Gastrocnemius medialis (tissue), 4 donors: ENCODE measurements at regions of chr13 and their contacts with region 1.

Region 1: GRCh38 chr13:48571126-48571913 is 38.4 kb upstream of the RCBTB2 start:
- DNase-seq: peak; percentile 49 to 54
- ATAC-seq: peak; percentile 81 to 88
- H3K4me3 ChIP-seq: peak overlapping the region; percentile 28 to 46 (median 38)
- H3K27ac ChIP-seq: peak overlapping the region; percentile 82 to 86 (median 86)
- H3K4me1 ChIP-seq: peaks cover 41 to 55% of the 10 kb centered on the region in 2 donors
- H3K27me3 ChIP-seq: no peaks in the 10 kb centered on the region
- CTCF ChIP-seq: no peak
- POLR2A ChIP-seq: no peak

Region 2: GRCh38 chr13:47726351-47726750 is 845.0 kb before region 1 on chr13:
- in situ Hi-C with region 1: no loop called
- intact Hi-C with region 1: no loop called
- DNase-seq: no peak
- ATAC-seq: no peak
- H3K4me3 ChIP-seq: no peak overlapping the region
- H3K27ac ChIP-seq: no peak overlapping the region
- H3K4me1 ChIP-seq: no peaks in the 10 kb centered on the region
- H3K27me3 ChIP-seq: no peaks in the 10 kb centered on the region
- CTCF ChIP-seq: no peak
- POLR2A ChIP-seq: no peak

Region 3: DNA sequence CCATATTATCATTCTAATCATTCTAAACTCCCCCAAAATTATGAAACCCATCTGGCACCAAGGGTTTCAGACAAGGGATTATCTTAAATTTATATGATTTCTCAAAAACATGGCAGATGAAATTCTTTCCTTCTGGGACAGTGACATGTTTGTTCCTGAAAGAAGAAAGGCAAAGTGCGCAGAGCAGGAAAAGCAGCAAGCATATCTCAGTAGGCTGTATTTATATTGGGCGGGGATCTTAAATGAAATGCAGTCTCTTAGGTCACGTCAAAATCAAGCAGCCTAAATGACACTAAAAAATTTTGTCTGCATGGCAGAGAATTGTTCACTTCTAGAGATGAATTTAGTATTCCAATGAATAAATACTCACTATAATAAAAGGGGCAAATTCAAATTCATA is 87.7 kb before region 1 on chr13:
- in situ Hi-C with region 1: no loop called
- intact Hi-C with region 1: no loop called
- DNase-seq: no peak
- ATAC-seq: no peak
- H3K4me3 ChIP-seq: no peak overlapping the region
- H3K27ac ChIP-seq: no peak overlapping the region
- H3K4me1 ChIP-seq: no peaks in the 10 kb centered on the region
- H3K27me3 ChIP-seq: no peaks in the 10 kb centered on the region
- CTCF ChIP-seq: no peak
- POLR2A ChIP-seq: no peak

Region 4: DNA sequence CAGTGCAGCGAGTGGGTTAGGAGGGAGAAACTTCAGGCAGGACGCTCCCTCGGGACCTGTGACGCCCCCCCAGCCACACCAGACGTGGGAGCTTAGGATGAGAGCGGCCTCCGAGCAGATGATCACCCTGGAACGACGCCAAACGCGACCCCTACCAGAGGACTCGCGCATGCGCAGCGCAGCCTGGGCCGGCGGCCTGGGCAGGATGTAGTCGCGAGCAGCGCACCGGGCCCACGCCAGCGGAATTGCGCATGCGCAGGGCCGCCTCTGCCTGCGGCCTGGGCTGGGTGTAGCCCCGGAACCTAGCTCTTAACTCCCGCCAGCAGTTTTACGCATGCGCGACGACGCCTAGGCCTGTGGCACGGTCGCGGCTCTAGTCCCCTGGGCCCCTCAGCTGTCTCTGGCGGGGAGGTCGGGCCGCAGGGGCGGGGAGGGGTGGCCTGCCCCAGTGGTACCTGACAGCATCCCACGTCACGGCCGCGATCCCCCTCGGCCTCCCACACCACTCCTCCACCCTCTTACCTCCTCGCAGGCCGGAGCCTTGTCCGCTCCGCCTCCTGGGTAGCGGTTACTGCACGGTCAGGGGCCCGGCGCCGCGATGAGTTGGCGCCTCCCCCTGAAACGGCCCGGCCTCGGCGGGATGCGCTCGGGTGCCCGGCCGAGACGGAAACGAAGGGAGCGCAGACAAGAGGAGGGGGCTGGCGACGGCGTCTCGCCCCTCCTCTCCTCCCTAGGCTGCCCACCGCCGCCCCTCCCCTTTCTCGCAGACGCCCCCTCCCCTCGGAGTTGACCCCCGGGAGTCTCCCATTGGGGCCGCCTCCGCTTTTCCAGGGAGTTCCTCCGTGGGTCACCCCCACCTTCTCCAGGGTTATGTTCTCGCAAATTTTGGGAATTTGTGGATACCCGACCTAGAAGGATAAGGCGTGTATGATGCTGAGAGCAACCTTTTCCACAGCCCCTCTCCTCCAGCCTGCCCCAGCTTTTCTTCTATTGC is 38.5 kb before region 1 on chr13 and contains the start of gene RCBTB2:
- in situ Hi-C with region 1: no loop called
- intact Hi-C with region 1: loop called (anchors 1 kb)
- DNase-seq: peak; percentile 96 to 98
- ATAC-seq: peak; percentile 95
- H3K4me3 ChIP-seq: peak within 1 kb of the TSS; percentile 81 to 94 (median 90)
- H3K27ac ChIP-seq: peak within 1 kb of the TSS; percentile 92 to 98 (median 94)
- H3K4me1 ChIP-seq: peaks cover 7 to 13% of the 10 kb centered on the region in 2 donors
- H3K27me3 ChIP-seq: no peaks in the 10 kb centered on the region
- CTCF ChIP-seq: no peak
- POLR2A ChIP-seq: peak; percentile 83 to 86
- total RNA-seq, gene RCBTB2: 1.7 to 9.1 (median 7.6) TPM

Region 5: GRCh38 chr13:48542581-48543341 is 28.6 kb before region 1 on chr13:
- in situ Hi-C with region 1: no loop called
- intact Hi-C with region 1: loop called (anchors 2 kb)
- DNase-seq: peak; percentile 77 to 79
- ATAC-seq: peak; percentile 94
- H3K4me3 ChIP-seq: peak overlapping the region; percentile 1 to 23 (median 22)
- H3K27ac ChIP-seq: peak overlapping the region; percentile 76 to 85 (median 81)
- H3K4me1 ChIP-seq: peaks cover 15 to 26% of the 10 kb centered on the region in 2 donors
- H3K27me3 ChIP-seq: no peaks in the 10 kb centered on the region
- CTCF ChIP-seq: peak in 2 of 5 experiments; percentile 17 to 21
- POLR2A ChIP-seq: no peak